ENCODE measurements at regions of chr11 and their contacts with region 1.

Region 1: DNA sequence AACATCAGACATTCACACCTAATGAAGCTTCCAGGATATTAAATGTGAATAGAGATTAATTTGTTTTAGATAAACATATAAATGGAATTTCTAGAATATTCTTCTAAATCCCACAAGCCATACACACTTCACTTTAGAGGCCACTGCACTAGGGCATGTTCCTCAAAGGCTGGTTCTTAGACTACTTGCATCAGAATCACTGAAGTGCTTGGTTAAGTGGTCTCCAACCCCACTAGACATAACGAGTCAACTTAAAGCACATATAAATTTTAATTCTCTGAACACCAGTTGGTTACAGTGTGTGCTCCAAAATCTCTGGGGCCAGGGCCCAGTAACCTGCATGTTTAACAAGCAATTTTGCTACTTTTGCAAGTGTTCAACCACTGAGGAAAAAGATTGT is 7.9 kb upstream of the ALKBH8 start:
- DNase-seq: no peak
- CTCF ChIP-seq: no peak

Region 2: DNA sequence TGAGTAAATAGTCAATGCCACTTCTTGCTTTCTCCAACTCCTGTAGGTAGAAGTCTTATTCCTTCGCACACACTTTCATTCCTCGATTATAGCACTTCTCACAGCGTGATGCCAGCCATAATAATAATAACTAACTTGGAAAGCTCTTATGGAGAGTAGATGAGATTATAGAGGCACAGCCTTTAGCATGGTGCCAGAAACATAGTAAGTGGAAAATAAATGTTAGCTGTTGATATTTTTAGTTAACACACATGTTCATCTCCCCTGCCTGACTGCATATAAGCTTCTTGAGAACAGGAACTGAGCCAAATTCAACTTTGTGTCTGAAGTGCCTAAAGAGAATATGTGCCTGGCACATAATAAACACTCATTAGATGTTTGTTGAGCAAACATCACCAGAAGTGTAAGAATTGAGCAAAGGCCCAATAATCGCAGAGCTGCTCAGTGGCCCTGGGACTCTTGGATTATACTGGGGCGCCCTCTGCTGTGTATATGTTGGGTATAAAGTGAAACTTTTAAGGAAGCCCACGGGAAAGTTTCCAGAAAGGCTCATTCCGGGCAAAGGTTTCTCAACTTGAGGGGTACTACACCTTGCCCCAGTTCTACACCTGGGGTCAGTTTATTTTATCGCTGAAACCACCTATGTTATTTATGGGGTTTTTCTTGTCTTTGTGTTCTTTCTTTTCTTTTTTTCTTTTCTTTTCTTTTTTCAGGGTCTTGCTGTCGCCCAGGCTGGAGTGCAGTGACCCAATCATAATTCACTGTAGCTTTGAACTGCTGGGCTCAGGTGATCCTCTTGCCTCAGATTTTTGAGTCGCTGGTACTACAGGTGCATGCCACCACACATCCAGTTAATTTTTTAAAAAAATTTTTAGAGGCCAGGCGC is 116.1 kb after region 1 on chr11:
- in situ Hi-C with region 1: loop called (anchors 10 kb)
- DNase-seq: peak; percentile 58
- CTCF ChIP-seq: peak; percentile 67